Ascending aorta (tissue), 2 donors: ENCODE measurements at regions of chr12 and their contacts with region 1.

Region 1: DNA sequence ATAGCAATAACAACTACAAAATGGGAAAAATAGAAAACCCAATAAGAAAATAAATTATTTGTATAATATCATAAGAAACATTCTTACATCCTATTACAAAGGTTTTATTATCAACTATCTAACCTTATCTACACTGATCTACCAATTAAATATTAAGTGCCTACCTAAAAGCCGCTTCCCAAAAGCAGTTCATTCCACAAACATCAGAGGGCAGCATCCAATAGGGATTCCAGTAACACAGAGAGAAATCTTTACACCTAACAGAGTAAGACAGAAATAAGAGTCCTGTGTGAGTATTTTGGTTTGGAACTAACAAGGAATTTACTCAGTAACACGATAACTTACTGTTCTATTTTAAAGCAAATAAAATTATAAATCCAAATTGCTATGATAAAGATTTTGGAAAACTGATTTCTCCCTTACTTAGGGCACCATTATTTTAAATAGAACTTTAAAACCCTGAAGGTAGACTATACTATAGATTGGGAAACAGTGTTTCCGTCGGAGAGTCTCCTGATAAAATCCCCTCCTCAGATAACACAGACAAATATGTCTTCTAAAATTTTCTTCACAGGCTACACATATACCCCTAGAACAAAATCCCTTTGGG is 15.0 kb downstream of the GXYLT1 start:
- DNase-seq: no peak
- H3K4me3 ChIP-seq: no peak overlapping the region
- H3K27ac ChIP-seq: no peak overlapping the region
- H3K4me1 ChIP-seq: peaks cover 5 to 10% of the 10 kb centered on the region in 2 donors
- H3K27me3 ChIP-seq: no peaks in the 10 kb centered on the region
- CTCF ChIP-seq: peak; percentile 62 to 82 (median 76)

Region 2: DNA sequence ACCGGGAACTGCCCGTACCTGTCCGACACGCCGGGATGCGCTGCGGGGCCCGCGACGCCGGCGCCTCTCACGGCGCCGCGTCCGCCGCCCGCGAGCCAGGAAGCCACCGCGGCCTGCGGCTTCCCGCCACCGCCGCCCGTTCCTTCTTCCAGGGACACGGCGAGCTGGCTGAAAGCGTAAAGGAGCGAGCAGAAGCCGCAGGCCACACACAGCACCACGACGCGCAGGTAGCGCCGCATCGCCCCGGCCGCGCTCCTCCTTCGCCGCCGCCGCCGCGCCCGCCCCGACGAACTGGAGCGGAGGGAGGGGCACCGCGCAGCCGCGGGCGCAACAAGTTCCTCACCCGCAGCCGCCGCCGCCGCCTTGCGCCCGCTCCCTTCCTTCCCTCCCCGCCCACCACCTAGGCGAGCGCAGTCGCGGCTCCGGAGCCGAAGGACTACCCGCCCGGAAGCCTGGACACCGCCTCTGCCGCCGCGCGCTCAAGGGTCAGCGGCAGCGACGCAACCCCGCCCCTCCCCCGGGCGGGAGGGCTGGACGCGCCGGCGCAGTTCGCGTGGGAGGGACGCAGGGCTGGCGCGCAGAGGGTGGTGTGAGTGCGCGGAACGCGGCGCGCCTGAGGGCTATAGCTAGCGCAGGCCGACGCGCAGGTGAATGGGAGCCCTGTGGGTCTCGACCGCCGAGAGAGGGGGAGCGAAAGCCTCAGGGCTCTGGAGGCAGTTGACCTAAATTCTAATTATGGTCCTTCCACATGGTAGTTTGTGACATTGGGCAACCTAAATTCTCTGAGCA is 14.9 kb after region 1 on chr12 and contains the start of gene GXYLT1:
- intact Hi-C with region 1: loop called (anchors 1 kb)
- DNase-seq: peak; percentile 66 to 94
- H3K4me3 ChIP-seq: peak within 1 kb of the TSS; percentile 87 to 91
- H3K27ac ChIP-seq: peak within 1 kb of the TSS; percentile 73 to 92
- H3K4me1 ChIP-seq: peaks cover 3 to 8% of the 10 kb centered on the region in 2 donors
- H3K27me3 ChIP-seq: no peaks in the 10 kb centered on the region
- CTCF ChIP-seq: no peak
- total RNA-seq, gene GXYLT1: 12.3 TPM

Region 3: DNA sequence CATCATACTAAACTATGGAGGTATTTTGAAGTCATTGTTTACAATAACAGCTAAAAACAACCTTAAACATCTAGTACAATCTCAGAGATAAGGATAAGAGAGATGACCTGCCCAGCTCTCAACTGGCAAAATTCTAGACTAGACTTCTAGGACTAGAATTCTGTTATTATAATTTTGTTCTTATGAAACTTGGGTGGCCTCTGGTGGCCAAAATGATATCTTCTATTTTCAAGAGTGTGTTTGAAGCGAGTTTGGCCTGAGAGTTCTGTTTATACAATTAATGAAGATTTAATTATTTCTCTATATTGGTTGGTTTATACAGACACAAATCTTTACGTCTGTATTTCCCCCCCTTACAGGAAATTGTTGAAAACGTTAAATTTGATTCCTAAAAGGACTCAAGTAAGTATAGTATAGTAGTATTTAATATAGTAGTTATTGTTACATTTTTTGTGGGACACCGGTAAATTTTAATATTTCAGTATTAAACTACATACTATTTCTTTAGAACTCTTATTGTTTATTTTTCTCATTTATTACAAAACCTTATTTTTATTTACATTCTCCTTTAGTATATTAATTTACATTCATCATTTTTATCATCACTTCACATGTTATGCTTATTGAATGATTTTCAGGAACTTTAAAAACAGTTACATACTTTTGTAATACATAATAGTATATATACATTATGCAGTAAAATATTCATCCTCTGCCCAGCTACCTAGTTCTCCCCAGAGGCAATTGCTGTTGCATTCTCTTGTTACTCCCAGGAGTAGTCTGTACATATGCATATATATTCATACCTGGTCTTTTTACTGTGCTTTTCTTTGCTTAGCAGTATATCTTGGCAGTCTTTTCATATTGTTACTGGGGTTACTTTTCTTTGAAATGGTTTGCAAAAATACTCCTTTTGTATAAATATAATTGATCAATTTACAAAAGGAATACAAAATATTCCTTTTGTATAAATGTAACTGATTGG is 202.9 kb after region 1 on chr12:
- intact Hi-C with region 1: loop called (anchors 1 kb)
- DNase-seq: no peak
- H3K4me3 ChIP-seq: no peak overlapping the region
- H3K27ac ChIP-seq: no peak overlapping the region
- H3K4me1 ChIP-seq: peaks cover 0 to 7% of the 10 kb centered on the region in 2 donors
- H3K27me3 ChIP-seq: no peaks in the 10 kb centered on the region
- CTCF ChIP-seq: peak; percentile 48 to 67 (median 51)